SK-N-SH (cell line): ENCODE measurements at regions of chr6 and their contacts with region 1.

Region 1: DNA sequence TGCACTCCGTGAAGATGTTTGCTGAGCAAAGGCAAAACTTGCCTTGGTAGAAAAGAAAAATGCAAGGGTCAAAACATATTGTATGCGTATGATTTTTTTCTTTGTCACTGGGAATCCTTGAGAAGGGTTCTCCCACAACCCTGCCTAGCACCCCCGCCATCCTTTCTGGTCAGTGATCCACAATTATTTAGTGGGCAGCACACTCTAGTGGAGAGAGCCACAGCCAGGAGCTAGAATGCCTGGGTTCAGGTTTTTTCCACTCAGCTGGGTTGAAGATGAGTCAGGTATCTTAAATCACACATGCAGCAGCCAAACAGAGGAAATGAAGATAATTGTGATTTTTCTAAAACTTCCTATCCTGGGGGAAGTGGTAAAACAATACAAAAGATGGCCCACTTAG is 243.1 kb downstream of the PKHD1 start:
- DNase-seq: peak; percentile 55
- H3K4me3 ChIP-seq: no peak overlapping the region
- H3K27ac ChIP-seq: peak overlapping the region in 1 of 2 experiments; percentile 95; a peak in 2 of 4 replicates
- H3K4me1 ChIP-seq: peaks cover 0 to 34% of the 10 kb centered on the region in 2 experiments; a peak in 2 of 4 replicates
- H3K27me3 ChIP-seq: no peaks in the 10 kb centered on the region
- CTCF ChIP-seq: no peak
- EP300 ChIP-seq: no peak
- RAD21 ChIP-seq: peak; percentile 85

Region 2: GRCh38 chr6:51541847-51542246 is 302.5 kb before region 1 on chr6:
- CTCF ChIA-PET with region 1: interaction called, 11 read pairs
- POLR2A ChIA-PET with region 1: no interaction called
- DNase-seq: peak; percentile 5
- H3K4me3 ChIP-seq: no peak overlapping the region
- H3K27ac ChIP-seq: peak overlapping the region in 1 of 2 experiments; percentile 56; a peak in 2 of 4 replicates
- H3K4me1 ChIP-seq: peaks cover 0 to 12% of the 10 kb centered on the region in 2 experiments; a peak in 2 of 4 replicates
- H3K27me3 ChIP-seq: no peaks in the 10 kb centered on the region; the same call in 1 of the 2 replicates
- CTCF ChIP-seq: peak; percentile 26; the same call in 1 of the 2 replicates
- EP300 ChIP-seq: no peak
- RAD21 ChIP-seq: peak; percentile 60

Region 3: DNA sequence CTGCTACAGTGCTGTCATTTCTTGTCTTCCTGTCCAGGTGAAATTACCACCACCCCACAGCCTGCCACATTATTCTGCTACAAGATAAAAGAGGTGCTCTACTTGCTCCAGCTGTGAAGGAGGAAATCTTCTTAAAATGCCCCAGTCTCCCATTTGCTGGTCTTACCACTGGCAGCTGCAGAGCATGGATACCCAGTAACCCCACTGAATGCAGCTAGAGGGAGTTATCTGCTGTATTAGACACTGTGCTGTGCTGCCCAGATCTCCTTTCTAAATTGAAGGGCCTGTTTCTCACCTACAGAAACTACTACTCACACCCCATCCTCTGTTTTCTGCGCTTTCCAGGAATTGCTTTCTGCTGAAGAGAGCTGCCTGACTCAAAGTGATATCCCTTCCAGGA is 274.7 kb before region 1 on chr6:
- CTCF ChIA-PET with region 1: interaction called, 13 read pairs
- POLR2A ChIA-PET with region 1: no interaction called
- DNase-seq: no peak
- H3K4me3 ChIP-seq: no peak overlapping the region
- H3K27ac ChIP-seq: peak overlapping the region in 1 of 2 experiments; percentile 88; a peak in 2 of 4 replicates
- H3K4me1 ChIP-seq: peaks cover 0 to 16% of the 10 kb centered on the region in 2 experiments; a peak in 2 of 4 replicates
- H3K27me3 ChIP-seq: no peaks in the 10 kb centered on the region; the same call in 1 of the 2 replicates
- CTCF ChIP-seq: no peak
- EP300 ChIP-seq: no peak
- RAD21 ChIP-seq: peak; percentile 68

Region 4: DNA sequence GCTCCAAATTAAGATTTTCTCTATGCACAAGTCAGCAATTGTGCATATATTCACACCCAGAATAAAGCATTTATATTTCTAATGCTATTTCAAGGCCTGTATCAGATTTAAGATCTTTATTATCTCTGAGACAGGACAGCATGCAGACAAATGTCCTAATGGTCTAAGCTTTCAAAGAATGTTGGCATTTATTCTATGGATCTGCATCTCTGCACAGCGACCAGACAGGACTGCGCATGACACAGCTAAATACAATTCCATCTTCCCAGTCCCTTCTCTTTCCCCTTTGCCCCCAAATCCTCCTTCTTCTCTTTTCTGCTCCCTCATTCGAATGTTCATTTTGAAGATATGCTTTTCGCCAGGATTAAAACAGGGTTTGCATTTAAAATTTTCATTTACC is 235.4 kb before region 1 on chr6:
- CTCF ChIA-PET with region 1: no interaction called
- POLR2A ChIA-PET with region 1: no interaction called
- DNase-seq: peak; percentile 40
- H3K4me3 ChIP-seq: no peak overlapping the region
- H3K27ac ChIP-seq: peak overlapping the region in 1 of 2 experiments; percentile 92; a peak in 2 of 4 replicates
- H3K4me1 ChIP-seq: peaks cover 3 to 11% of the 10 kb centered on the region in 2 experiments; a peak in 2 of 4 replicates
- H3K27me3 ChIP-seq: no peaks in the 10 kb centered on the region
- CTCF ChIP-seq: no peak
- EP300 ChIP-seq: peak in 1 of 2 experiments; percentile 45; a peak in 1 of 4 replicates
- RAD21 ChIP-seq: no peak

Region 5: DNA sequence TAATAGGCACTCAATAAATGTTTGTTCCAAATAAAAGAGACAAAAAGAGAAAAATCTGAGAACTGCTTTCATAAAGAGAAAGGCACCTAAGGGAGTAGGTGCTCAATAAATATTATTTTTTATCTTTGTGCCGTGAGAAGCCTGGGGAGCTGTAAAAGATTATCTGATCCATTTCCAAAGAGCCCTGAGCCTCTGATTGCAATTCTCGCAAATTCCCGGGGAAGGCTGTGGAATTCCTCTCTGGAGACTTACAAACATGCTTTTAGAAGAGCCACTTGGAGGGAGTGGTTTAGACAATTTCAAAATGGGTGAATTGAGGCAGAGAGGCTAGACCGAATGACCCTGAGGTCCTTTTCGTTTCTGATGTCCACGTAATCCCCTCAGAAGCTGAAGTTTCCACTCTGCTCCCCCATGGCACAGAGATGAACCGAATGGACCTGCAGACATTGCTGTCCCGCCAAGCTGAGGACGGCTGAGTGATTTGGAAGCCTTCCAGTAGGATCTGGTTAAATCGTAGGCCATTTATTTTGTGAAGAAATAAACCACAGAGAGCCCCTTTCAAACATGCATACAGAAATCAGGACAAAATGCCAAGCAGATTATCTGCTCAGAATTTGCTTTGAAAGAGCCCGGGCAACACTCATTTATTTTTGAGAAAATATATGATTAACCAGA is 165.3 kb after region 1 on chr6:
- CTCF ChIA-PET with region 1: interaction called, 21 read pairs
- POLR2A ChIA-PET with region 1: no interaction called
- DNase-seq: peak; percentile 53
- H3K4me3 ChIP-seq: no peak overlapping the region; a peak in 1 of 4 replicates
- H3K27ac ChIP-seq: peak overlapping the region in 1 of 2 experiments; percentile 100; a peak in 2 of 4 replicates
- H3K4me1 ChIP-seq: peaks cover 0 to 34% of the 10 kb centered on the region in 2 experiments; a peak in 2 of 4 replicates
- H3K27me3 ChIP-seq: no peaks in the 10 kb centered on the region; the same call in 1 of the 2 replicates
- CTCF ChIP-seq: no peak
- EP300 ChIP-seq: no peak; a peak in 1 of 4 replicates
- RAD21 ChIP-seq: no peak

Region 6: GRCh38 chr6:53517056-53517455 is 1672.7 kb after region 1 on chr6:
- CTCF ChIA-PET with region 1: no interaction called
- POLR2A ChIA-PET with region 1: no interaction called
- DNase-seq: no peak
- H3K4me3 ChIP-seq: no peak overlapping the region
- H3K27ac ChIP-seq: no peak overlapping the region
- H3K4me1 ChIP-seq: no peaks in the 10 kb centered on the region; a peak in 2 of 4 replicates
- H3K27me3 ChIP-seq: no peaks in the 10 kb centered on the region
- CTCF ChIP-seq: no peak
- EP300 ChIP-seq: no peak
- RAD21 ChIP-seq: no peak